GM12878 (cell line): ENCODE measurements at regions of chr16 and their contacts with region 1.

Region 1: DNA sequence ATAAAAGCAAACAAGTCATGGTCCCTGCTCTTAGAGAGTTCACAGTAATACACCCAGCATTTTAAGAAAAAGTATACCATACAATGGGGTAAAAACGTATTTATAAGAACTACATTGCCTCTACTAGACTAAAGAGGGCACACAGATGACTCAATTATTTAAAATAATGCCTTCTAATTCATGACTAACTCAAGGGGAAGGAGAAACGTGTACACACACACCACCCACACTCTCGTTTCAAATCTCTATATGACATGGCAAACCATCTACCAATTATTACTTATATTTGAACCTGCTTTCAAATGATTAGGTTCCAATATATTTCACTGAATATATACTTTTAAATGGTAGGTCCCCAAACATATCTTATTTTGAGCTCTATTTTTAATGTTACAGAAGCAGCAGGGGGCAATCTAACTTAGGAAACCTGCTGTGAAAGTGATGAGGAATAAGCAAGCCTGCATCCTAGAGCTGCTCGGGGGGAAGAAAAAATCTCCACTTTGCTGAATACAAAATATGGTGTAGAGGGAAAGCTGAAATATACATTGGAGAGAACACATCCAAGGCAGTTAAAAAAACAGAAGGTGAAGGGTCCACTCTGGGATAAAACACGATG is 232.4 kb upstream of the PSMD7 start:
- DNase-seq: no peak
- ATAC-seq: peak; percentile 69
- H3K4me3 ChIP-seq: no peak overlapping the region
- H3K27ac ChIP-seq: no peak overlapping the region
- H3K4me1 ChIP-seq: no peaks in the 10 kb centered on the region
- H3K27me3 ChIP-seq: no peaks in the 10 kb centered on the region
- CTCF ChIP-seq: peak in 1 of 3 experiments; percentile 39; a peak in 1 of 6 replicates
- EP300 ChIP-seq: no peak
- POLR2A ChIP-seq: no peak
- RAD21 ChIP-seq: 0 out of 2 replicates have a peak, but pooled peaks have one; percentile 15

Region 2: GRCh38 chr16:73846356-73846755 is 217.9 kb before region 1 on chr16:
- CTCF ChIA-PET with region 1: no interaction called
- POLR2A ChIA-PET with region 1: no interaction called
- RAD21 ChIA-PET with region 1: no interaction called
- SMC1A ChIA-PET with region 1: no interaction called
- in situ Hi-C with region 1: no loop called
- intact Hi-C with region 1: no loop called
- DNase-seq: no peak
- ATAC-seq: no peak
- H3K4me3 ChIP-seq: no peak overlapping the region
- H3K27ac ChIP-seq: no peak overlapping the region
- H3K4me1 ChIP-seq: no peaks in the 10 kb centered on the region
- H3K27me3 ChIP-seq: no peaks in the 10 kb centered on the region
- CTCF ChIP-seq: 0 out of 6 replicates have a peak, but pooled peaks of 1 of the 3 experiments have one; percentile 6
- EP300 ChIP-seq: no peak
- POLR2A ChIP-seq: no peak
- RAD21 ChIP-seq: no peak

Region 3: GRCh38 chr16:74034862-74035261 is 29.4 kb before region 1 on chr16:
- CTCF ChIA-PET with region 1: interaction called, 11 read pairs
- POLR2A ChIA-PET with region 1: no interaction called
- RAD21 ChIA-PET with region 1: interaction called, 5 read pairs
- SMC1A ChIA-PET with region 1: interaction called, 3 read pairs
- in situ Hi-C with region 1: no loop called
- intact Hi-C with region 1: no loop called
- DNase-seq: no peak
- ATAC-seq: peak; percentile 79
- H3K4me3 ChIP-seq: no peak overlapping the region
- H3K27ac ChIP-seq: no peak overlapping the region
- H3K4me1 ChIP-seq: no peaks in the 10 kb centered on the region
- H3K27me3 ChIP-seq: no peaks in the 10 kb centered on the region
- CTCF ChIP-seq: peak; percentile 19 to 39 (median 33); a peak in 3 of 6 replicates
- EP300 ChIP-seq: no peak
- POLR2A ChIP-seq: no peak
- RAD21 ChIP-seq: peak; percentile 33

Region 4: DNA sequence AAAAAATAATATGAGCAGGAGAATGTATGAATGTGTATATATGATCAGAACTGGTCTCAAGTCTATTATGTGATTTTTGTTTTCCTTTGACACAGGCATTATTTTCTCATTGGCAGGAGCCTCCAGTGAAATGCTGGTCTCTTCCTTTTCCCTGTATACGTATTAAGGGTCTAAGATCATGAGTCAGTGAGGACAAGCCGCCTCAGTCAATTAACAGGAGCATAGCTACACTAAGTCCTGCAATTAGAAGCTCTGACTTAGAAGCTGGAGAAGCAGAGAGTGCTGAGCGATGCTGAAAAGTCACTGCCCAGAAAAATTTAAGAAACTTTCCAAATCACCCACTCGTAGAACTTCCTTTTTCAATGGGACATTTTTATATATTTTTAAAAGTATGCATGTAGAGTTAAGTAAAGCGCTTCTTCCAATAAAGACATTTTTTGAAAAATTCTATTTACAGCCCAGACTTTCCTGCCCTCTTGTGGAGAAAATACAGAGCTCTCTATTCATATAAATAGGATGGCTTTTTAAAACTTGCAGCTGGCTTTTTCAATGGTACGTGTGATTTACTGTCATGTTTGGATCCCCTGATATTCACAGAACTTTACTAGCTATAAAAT is 162.2 kb after region 1 on chr16:
- CTCF ChIA-PET with region 1: interaction called, 19 read pairs
- POLR2A ChIA-PET with region 1: no interaction called
- RAD21 ChIA-PET with region 1: interaction called, 6 read pairs
- SMC1A ChIA-PET with region 1: interaction called, 14 read pairs
- in situ Hi-C with region 1: no loop called
- intact Hi-C with region 1: no loop called
- DNase-seq: no peak
- ATAC-seq: no peak
- H3K4me3 ChIP-seq: no peak overlapping the region
- H3K27ac ChIP-seq: no peak overlapping the region
- H3K4me1 ChIP-seq: no peaks in the 10 kb centered on the region
- H3K27me3 ChIP-seq: no peaks in the 10 kb centered on the region
- CTCF ChIP-seq: peak; percentile 8 to 40 (median 15); a peak in 3 of 6 replicates
- EP300 ChIP-seq: no peak
- POLR2A ChIP-seq: no peak
- RAD21 ChIP-seq: peak; percentile 30

Region 5: DNA sequence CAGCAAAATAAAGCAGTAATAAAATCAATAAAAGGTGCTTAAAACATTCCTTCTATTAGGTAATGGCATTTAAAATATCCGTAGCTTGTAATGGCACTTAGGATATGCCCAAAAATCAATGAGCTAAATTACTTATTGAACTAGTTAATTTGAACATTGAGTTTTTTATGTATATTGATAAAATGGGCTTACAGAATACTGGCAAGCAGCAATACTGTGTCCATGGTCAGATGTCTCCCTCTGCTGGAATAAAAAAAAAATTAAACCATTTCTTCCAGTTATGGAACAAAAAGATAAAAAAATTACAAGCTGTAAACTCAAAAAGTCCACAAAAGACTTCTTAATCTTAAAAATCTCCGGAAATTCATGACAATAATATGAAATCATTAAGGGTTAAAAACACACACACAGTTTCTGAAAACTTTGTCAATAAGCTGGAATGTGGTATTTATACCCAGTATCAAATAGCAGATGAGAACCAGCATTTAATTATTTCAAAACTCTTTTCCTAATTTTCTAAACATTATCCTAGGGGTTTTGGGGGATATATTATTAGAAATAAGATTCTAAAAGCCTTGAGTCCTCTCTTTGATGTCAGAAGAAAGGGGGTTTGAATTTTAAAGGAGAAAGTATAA is 210.9 kb after region 1 on chr16:
- CTCF ChIA-PET with region 1: interaction called, 18 read pairs
- POLR2A ChIA-PET with region 1: no interaction called
- RAD21 ChIA-PET with region 1: interaction called, 20 read pairs
- SMC1A ChIA-PET with region 1: interaction called, 4 read pairs
- in situ Hi-C with region 1: no loop called
- intact Hi-C with region 1: loop called (anchors 10 kb)
- DNase-seq: no peak
- ATAC-seq: no peak
- H3K4me3 ChIP-seq: no peak overlapping the region
- H3K27ac ChIP-seq: no peak overlapping the region
- H3K4me1 ChIP-seq: no peaks in the 10 kb centered on the region
- H3K27me3 ChIP-seq: no peaks in the 10 kb centered on the region
- CTCF ChIP-seq: peak; percentile 22 to 50 (median 28); a peak in 4 of 6 replicates
- EP300 ChIP-seq: no peak
- POLR2A ChIP-seq: no peak
- RAD21 ChIP-seq: peak; percentile 63